Natural killer cell (primary cell): ENCODE measurements at regions of chr3 and their contacts with region 1.

Region 1: GRCh38 chr3:128095222-128095703 is 28.3 kb downstream of the RUVBL1 start:
- DNase-seq: peak; percentile 63 to 88
- ATAC-seq: peak; percentile 93 to 99 (median 99)
- H3K4me3 ChIP-seq: no peak overlapping the region
- H3K4me3 Mint-ChIP-seq: no peak overlapping the region
- H3K27ac ChIP-seq: no peak overlapping the region
- H3K27ac Mint-ChIP-seq: peak overlapping the region in 1 of 2 donors; percentile 56
- H3K4me1 ChIP-seq: no peaks in the 10 kb centered on the region
- H3K4me1 Mint-ChIP-seq: peaks cover 7 to 9% of the 10 kb centered on the region in 2 donors
- H3K27me3 ChIP-seq: no peaks in the 10 kb centered on the region
- H3K27me3 Mint-ChIP-seq: no peaks in the 10 kb centered on the region
- CTCF ChIP-seq: peak; percentile 78

Region 2: DNA sequence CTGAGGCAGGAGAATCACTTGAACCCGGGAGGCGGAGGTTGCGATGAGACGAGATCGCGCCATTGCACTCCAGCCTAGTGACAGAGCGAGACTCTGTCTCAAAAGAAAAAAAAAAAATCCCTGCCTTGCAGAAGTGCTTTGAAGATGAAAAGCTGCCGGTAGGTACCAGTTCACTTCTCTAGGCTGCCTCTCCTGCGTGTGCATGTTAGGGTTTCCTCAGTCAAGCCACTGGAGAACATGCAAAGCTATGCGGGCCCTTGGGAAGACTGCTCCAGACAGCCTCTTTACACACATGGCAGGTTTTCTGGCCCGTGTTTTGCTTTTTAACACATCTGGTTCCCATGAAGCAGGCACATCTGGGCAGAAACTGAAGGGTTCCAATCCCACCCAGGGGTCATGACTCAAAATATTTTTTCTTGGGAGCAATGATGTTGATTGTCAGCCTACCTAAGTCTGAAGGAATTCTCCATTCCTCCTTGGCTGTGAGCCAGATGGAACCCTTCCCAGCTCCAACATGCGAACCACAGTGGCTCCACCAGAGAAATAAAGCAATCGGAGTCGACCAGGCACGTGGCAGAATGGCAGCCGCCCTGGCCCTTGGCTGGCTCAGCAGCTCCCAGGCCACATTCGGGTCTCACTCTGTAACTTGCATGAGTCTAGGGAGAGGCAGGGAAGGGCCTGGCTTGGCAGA is 302.5 kb before region 1 on chr3:
- intact Hi-C with region 1: no loop called
- DNase-seq: no peak
- ATAC-seq: no peak
- H3K4me3 ChIP-seq: no peak overlapping the region
- H3K4me3 Mint-ChIP-seq: no peak overlapping the region
- H3K27ac ChIP-seq: no peak overlapping the region
- H3K27ac Mint-ChIP-seq: no peak overlapping the region
- H3K4me1 ChIP-seq: no peaks in the 10 kb centered on the region
- H3K4me1 Mint-ChIP-seq: no peaks in the 10 kb centered on the region
- H3K27me3 ChIP-seq: no peaks in the 10 kb centered on the region
- H3K27me3 Mint-ChIP-seq: peaks cover 0 to 2% of the 10 kb centered on the region in 2 donors
- CTCF ChIP-seq: no peak

Region 3: GRCh38 chr3:128133273-128134084 is 38.2 kb after region 1 on chr3:
- intact Hi-C with region 1: loop called (anchors 1 kb)
- DNase-seq: peak in 1 of 2 donors; percentile 75
- ATAC-seq: peak in 2 of 3 donors; percentile 67 to 70
- H3K4me3 ChIP-seq: no peak overlapping the region
- H3K4me3 Mint-ChIP-seq: no peak overlapping the region
- H3K27ac ChIP-seq: no peak overlapping the region
- H3K27ac Mint-ChIP-seq: no peak overlapping the region
- H3K4me1 ChIP-seq: no peaks in the 10 kb centered on the region
- H3K4me1 Mint-ChIP-seq: no peaks in the 10 kb centered on the region
- H3K27me3 ChIP-seq: peaks cover 2% of the 10 kb centered on the region
- H3K27me3 Mint-ChIP-seq: peaks cover 18 to 26% of the 10 kb centered on the region in 2 donors
- CTCF ChIP-seq: peak; percentile 46

Region 4: GRCh38 chr3:128322066-128323022 is 227.1 kb after region 1 on chr3:
- intact Hi-C with region 1: loop called (anchors 1 kb)
- DNase-seq: peak in 1 of 2 donors; percentile 79
- ATAC-seq: peak in 1 of 3 donors; percentile 28
- H3K4me3 ChIP-seq: no peak overlapping the region
- H3K4me3 Mint-ChIP-seq: no peak overlapping the region
- H3K27ac ChIP-seq: no peak overlapping the region
- H3K27ac Mint-ChIP-seq: no peak overlapping the region
- H3K4me1 ChIP-seq: no peaks in the 10 kb centered on the region
- H3K4me1 Mint-ChIP-seq: peaks cover 0 to 11% of the 10 kb centered on the region in 2 donors
- H3K27me3 ChIP-seq: no peaks in the 10 kb centered on the region
- H3K27me3 Mint-ChIP-seq: no peaks in the 10 kb centered on the region
- CTCF ChIP-seq: no peak

Region 5: GRCh38 chr3:128497387-128498126 is 402.3 kb after region 1 on chr3:
- intact Hi-C with region 1: loop called (anchors 1 kb)
- DNase-seq: peak; percentile 54 to 77
- ATAC-seq: peak; percentile 39 to 70 (median 60)
- H3K4me3 ChIP-seq: peak overlapping the region; percentile 11
- H3K4me3 Mint-ChIP-seq: peak overlapping the region; percentile 78
- H3K27ac ChIP-seq: no peak overlapping the region
- H3K27ac Mint-ChIP-seq: no peak overlapping the region
- H3K4me1 ChIP-seq: peaks cover 14% of the 10 kb centered on the region
- H3K4me1 Mint-ChIP-seq: peaks cover 0 to 21% of the 10 kb centered on the region in 2 donors
- H3K27me3 ChIP-seq: peaks cover 23% of the 10 kb centered on the region
- H3K27me3 Mint-ChIP-seq: peaks cover 66 to 77% of the 10 kb centered on the region in 2 donors
- CTCF ChIP-seq: peak; percentile 69

Region 6: GRCh38 chr3:128607710-128608048 is 512.4 kb after region 1 on chr3:
- intact Hi-C with region 1: loop called (anchors 1 kb)
- DNase-seq: no peak
- ATAC-seq: no peak
- H3K4me3 ChIP-seq: peak overlapping the region; percentile 37
- H3K4me3 Mint-ChIP-seq: peak overlapping the region; percentile 17
- H3K27ac ChIP-seq: no peak overlapping the region
- H3K27ac Mint-ChIP-seq: no peak overlapping the region
- H3K4me1 ChIP-seq: peaks cover 12% of the 10 kb centered on the region
- H3K4me1 Mint-ChIP-seq: no peaks in the 10 kb centered on the region
- H3K27me3 ChIP-seq: no peaks in the 10 kb centered on the region
- H3K27me3 Mint-ChIP-seq: no peaks in the 10 kb centered on the region
- CTCF ChIP-seq: no peak